ENCODE measurements at regions of chr2 and their contacts with region 1.

Region 1: DNA sequence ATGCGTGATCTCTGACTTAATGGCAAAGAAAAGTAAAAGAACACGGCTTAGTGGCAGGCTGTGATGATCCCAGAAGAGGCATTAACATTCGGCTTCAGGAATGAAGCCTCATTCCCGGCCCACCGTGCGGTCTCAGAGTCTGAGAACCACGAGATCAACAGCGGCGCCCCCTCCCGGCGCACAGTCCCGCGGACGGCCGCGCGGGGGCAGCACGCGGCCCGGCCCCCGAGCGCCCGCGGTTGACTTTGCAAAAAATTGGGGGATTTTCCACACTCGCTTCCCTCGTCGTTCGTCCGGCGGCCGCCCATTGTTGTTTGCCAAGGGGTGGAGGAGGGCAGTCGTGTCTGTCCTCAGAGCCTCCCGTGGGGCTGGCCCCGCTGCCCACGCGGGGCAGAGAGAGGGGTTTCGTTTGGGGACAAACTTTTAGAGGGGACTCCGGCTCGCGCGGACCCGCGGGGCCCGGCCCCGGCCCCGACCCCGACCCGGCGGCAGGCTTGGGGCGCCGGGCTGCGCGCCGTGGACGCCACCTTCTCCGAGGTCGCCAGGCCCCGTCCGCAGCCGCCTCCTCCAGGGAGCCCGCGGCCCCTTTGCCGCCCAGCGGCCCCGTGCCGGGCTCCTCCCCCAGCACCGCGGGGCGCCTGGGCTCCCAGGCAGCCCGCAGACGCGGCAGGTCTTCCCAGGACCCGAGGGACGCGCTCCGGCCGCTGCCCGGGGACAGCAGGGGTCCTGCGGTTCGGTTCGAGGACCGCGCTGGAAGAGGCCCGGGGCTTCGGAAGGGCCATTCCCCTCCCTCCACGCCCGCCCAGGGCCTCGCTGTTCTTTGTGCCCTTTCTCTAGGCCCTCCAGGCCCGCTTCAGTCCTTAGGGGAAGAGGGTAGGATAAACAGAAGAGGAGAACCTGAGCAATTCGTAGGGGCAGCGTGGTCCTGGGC is 3.4 kb upstream of the HS6ST1 start:
- DNase-seq: peak; percentile 84
- H3K4me3 Mint-ChIP-seq: peak overlapping the region; percentile 52
- H3K27ac Mint-ChIP-seq: no peak overlapping the region
- H3K4me1 Mint-ChIP-seq: peaks cover 11% of the 10 kb centered on the region
- H3K27me3 Mint-ChIP-seq: no peaks in the 10 kb centered on the region

Region 2: DNA sequence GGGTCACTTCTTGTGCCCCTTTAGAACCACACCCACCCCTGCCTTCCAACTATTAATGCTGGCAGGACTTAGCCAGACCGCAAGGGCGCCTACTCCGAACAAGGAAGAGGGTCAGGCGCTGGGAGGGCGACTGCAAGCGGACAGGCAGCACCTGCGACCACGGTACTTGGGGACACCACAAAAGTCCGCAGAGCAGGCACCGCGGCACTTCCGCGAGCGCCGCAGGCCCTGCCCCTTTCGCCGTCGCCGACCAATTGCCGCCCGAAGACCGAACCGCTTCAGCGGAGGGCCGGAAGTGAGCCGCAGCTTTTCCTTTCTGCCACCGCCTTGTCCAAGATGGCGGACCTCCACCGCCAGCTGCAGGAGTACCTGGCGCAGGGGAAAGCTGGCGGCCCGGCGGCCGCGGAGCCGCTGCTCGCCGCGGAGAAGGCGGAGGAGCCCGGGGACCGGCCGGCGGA is 620.8 kb before region 1 on chr2 and contains the start of gene SFT2D3:
- CTCF ChIA-PET with region 1: no interaction called
- intact Hi-C with region 1: loop called (anchors 2 kb)
- DNase-seq: peak; percentile 94
- H3K4me3 Mint-ChIP-seq: peak within 1 kb of the TSS; percentile 88
- H3K27ac Mint-ChIP-seq: peak within 1 kb of the TSS; percentile 95
- H3K4me1 Mint-ChIP-seq: peaks cover 38% of the 10 kb centered on the region
- H3K27me3 Mint-ChIP-seq: no peaks in the 10 kb centered on the region
- total RNA-seq, gene SFT2D3: 3.1 to 3.3 TPM

Region 3: GRCh38 chr2:128016620-128017019 is 305.4 kb before region 1 on chr2:
- CTCF ChIA-PET with region 1: no interaction called
- intact Hi-C with region 1: no loop called
- DNase-seq: no peak
- H3K4me3 Mint-ChIP-seq: no peak overlapping the region
- H3K27ac Mint-ChIP-seq: no peak overlapping the region
- H3K4me1 Mint-ChIP-seq: peaks cover 4% of the 10 kb centered on the region
- H3K27me3 Mint-ChIP-seq: no peaks in the 10 kb centered on the region

Region 4: GRCh38 chr2:128027801-128028667 is 294.0 kb before region 1 on chr2 and contains the start of gene SAP130:
- CTCF ChIA-PET with region 1: no interaction called
- intact Hi-C with region 1: loop called (anchors 1 kb)
- DNase-seq: peak; percentile 98
- H3K4me3 Mint-ChIP-seq: peak within 1 kb of the TSS; percentile 97
- H3K27ac Mint-ChIP-seq: peak within 1 kb of the TSS; percentile 72
- H3K4me1 Mint-ChIP-seq: peaks cover 11% of the 10 kb centered on the region
- H3K27me3 Mint-ChIP-seq: no peaks in the 10 kb centered on the region
- total RNA-seq, gene SAP130: 20.4 to 20.5 TPM

Region 5: DNA sequence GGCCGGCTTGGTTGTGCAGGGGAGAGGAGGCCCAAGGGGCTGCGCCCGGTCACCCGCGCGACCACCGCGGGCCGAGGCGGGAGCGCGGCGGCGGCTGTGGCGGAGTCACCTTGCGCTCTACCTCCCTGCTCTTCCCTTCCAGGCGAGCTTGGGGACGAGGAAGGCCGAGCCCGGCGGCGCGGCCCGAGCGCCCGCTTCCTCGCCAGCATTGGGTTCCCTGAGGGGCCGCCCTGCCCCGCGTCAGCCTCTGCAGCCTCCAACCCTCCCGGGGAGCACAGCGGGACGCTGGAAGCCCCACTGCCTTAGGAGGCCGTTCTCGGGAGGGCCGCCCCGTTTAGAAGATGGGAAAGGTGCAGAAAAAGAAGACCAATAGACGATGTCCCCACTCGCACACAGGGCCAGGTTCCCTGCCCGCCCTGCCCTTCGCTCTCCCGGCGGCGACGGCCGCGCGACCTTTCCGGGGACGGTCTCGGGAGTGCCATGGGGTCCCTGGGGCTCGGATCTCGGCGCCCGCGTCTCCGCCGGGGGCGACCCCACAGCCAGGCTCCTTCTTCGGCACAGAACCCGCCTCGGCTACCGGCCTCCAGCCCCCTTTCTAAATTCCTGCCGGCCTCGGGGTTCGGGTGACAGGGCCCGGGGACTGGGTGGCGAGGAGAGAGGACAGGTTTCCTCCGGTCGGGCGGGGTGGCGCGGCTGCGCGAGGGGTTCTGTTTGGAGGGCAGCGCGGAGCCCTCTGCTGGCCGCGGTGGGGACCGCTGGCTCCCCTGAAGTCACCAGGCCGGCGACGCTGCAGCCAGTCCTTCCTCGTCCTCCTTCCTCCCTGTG is 88.9 kb before region 1 on chr2:
- CTCF ChIA-PET with region 1: no interaction called
- intact Hi-C with region 1: loop called (anchors 5 kb)
- DNase-seq: peak; percentile 91
- H3K4me3 Mint-ChIP-seq: peak overlapping the region; percentile 71
- H3K27ac Mint-ChIP-seq: no peak overlapping the region
- H3K4me1 Mint-ChIP-seq: peaks cover 4% of the 10 kb centered on the region
- H3K27me3 Mint-ChIP-seq: no peaks in the 10 kb centered on the region

Region 6: GRCh38 chr2:128388499-128388941 is 66.5 kb after region 1 on chr2:
- CTCF ChIA-PET with region 1: no interaction called
- intact Hi-C with region 1: no loop called
- DNase-seq: no peak
- H3K4me3 Mint-ChIP-seq: no peak overlapping the region
- H3K27ac Mint-ChIP-seq: no peak overlapping the region
- H3K4me1 Mint-ChIP-seq: no peaks in the 10 kb centered on the region
- H3K27me3 Mint-ChIP-seq: no peaks in the 10 kb centered on the region

Region 7: GRCh38 chr2:128736689-128737545 is 414.9 kb after region 1 on chr2:
- CTCF ChIA-PET with region 1: no interaction called
- intact Hi-C with region 1: loop called (anchors 5 kb)
- DNase-seq: peak; percentile 70
- H3K4me3 Mint-ChIP-seq: no peak overlapping the region
- H3K27ac Mint-ChIP-seq: no peak overlapping the region
- H3K4me1 Mint-ChIP-seq: peaks cover 5% of the 10 kb centered on the region
- H3K27me3 Mint-ChIP-seq: peaks cover 20% of the 10 kb centered on the region

Region 8: GRCh38 chr2:129877289-129877779 is 1555.3 kb after region 1 on chr2:
- CTCF ChIA-PET with region 1: no interaction called
- intact Hi-C with region 1: loop called (anchors 10 kb)
- DNase-seq: peak; percentile 91
- H3K4me3 Mint-ChIP-seq: peak overlapping the region; percentile 92
- H3K27ac Mint-ChIP-seq: peak overlapping the region; percentile 89
- H3K4me1 Mint-ChIP-seq: peaks cover 6% of the 10 kb centered on the region
- H3K27me3 Mint-ChIP-seq: no peaks in the 10 kb centered on the region

Measured in activated naive CD4-positive, alpha-beta T cell treated with anti-CD3 and anti-CD28 coated beads for 36 hours (primary cell).